Ovary (tissue), 10 donors: ENCODE measurements at regions of chr16 and their contacts with region 1.

Region 1: DNA sequence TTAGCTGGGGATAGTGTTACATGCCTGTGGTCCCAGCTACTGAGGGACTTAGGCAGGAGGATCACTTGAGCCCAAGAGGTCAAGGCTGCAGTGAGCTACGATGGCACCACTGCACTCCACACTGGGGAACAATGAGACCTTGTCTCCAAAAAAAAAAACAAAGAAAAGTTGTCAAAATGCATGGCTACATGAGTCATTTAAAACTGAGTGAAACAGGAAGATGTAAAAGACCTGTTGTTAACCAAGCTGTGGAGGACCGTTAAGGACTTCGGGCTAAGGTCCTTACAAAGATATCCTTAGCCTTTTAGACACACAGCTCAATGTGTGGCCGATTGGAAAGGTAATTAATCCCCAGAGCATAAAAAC is 25.1 kb downstream of the ZP2 start:
- DNase-seq: no peak
- H3K4me3 ChIP-seq: no peak overlapping the region
- H3K27ac ChIP-seq: no peak overlapping the region
- H3K4me1 ChIP-seq: peaks cover 2% of the 10 kb centered on the region
- H3K27me3 ChIP-seq: no peaks in the 10 kb centered on the region
- CTCF ChIP-seq: no peak
- EP300 ChIP-seq: no peak
- POLR2A ChIP-seq: no peak

Region 2: DNA sequence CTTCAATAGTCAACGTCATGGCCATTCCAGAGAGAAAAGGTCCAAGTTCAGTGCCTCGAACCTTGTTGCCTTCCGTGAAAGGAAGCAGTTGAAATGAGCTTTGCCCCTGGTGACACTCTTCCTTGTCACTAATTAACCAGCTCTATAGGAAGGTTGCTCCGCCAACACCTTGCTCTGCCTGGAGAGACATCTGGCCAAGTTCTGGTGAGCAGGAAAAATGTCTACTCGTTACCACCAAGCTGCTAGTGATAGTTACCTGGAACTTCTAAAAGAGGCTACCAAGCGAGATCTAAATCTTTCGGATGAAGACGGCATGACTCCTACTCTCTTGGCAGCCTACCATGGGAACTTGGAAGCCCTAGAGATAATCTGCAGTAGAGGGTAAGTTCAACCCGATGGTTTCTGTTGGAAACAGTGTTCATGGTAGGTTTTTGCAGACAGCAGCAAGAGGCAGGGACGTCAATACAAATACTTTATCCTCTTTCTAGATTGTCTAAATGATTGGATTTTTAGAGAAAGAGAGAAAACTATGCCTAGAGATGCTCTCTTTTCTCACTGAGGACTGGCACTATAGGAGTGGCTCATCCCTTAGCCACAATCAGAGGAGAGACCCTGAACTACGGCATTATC is 47.3 kb after region 1 on chr16 and contains the start of gene ANKS4B:
- intact Hi-C with region 1: no loop called
- DNase-seq: no peak
- H3K4me3 ChIP-seq: no peak within 1 kb of the TSS
- H3K27ac ChIP-seq: no peak within 1 kb of the TSS
- H3K4me1 ChIP-seq: no peaks in the 10 kb centered on the region
- H3K27me3 ChIP-seq: no peaks in the 10 kb centered on the region
- CTCF ChIP-seq: no peak
- EP300 ChIP-seq: no peak
- POLR2A ChIP-seq: no peak
- total RNA-seq, gene ANKS4B: under 0.01 to 0.05 TPM in 2 of 7 donors, not detected in the others

Region 3: DNA sequence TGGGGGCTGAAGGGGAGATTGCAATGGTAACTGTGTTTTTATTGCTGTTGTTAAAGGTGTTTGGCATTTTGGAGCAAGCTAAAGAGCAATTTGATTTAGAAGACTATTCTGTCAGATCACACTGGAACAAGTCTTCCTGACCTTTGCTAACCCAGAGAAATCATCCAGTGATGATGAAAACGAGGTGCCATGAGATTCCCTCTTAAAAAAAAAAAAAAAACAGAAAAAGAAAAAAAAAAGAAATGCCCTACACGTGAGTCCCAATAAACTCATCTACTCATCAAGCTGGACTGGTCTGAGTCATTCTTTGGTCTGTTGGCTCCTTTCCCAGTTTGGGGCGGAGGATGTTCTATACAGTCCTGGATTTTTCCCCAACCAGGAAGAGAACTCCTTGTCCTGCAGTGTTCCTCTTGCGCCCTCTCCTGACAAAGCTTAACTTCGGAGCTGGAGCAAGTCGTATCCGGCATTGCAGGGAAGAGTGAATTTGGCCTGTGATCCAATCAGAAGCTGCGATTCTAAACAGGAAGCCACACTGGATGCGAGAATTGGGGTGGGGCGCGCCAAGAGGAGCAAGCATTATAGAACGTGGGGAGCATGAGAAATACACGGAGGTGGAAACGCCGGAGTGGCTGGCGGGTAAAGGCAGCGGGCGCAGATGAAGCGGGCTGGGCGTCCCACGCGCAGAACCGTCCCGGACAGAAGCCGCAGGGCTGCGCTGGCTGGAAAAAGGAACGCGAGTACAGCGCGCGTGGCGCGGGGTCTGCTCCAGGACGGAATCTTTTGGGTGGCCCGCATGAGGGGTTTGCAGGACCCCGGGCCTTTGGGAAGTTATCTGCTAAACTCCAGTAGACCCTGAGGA is 114.2 kb after region 1 on chr16:
- intact Hi-C with region 1: loop called in 1 of 4 experiments (anchors 2 kb)
- DNase-seq: peak; percentile 88 to 97 (median 96)
- H3K4me3 ChIP-seq: peak overlapping the region; percentile 54
- H3K27ac ChIP-seq: peak overlapping the region; percentile 22 to 60
- H3K4me1 ChIP-seq: no peaks in the 10 kb centered on the region
- H3K27me3 ChIP-seq: no peaks in the 10 kb centered on the region
- CTCF ChIP-seq: peak; percentile 88 to 89 (median 89)
- EP300 ChIP-seq: no peak
- POLR2A ChIP-seq: no peak